MCF 10A (cell line): ENCODE measurements at regions of chr17 and their contacts with region 1.

Region 1: DNA sequence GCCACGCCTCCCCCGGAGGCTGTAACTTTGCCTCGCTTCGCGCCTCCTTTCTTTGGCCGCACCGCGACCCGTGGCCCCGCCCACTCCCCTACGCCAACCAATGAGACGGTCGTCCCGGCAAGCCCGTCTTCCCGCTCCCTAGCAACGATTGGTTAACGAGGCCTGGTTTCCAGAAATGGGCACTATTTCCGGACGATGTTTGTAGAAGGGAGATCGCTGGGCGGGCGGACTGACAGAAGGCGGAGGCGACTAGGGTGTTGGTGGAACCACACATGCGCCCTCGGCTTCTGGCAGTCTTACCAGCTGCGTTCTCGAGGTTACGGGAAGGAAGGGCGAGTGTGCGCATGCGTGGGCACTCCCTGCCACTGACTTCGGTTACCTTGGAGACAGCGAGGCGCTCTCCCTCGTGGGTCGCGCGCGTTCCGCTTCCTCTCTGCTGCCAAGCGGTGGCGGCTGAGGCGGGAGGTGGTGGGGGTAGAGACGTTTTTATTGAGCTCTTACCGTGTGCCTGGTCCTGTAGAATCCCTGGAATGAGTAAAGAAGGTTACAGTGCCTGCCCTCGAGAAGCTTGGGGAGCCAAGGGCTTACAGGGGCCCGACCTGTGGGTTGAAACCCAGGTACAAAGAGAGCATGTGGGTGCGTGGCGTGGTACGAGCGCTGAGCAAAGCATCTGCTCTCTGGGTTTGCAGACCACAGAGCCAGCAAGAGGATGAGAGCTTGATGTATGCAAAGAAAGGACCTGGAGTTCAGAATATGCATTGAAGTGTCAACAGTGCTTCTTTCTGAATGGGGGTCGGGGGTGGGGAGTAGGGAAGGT is 500 bp upstream of the MAP3K14 start:
- DNase-seq: peak; percentile 100
- H3K4me3 Mint-ChIP-seq: peak overlapping the region; percentile 86
- H3K27ac Mint-ChIP-seq: peak overlapping the region; percentile 98
- H3K4me1 Mint-ChIP-seq: peaks cover 71% of the 10 kb centered on the region
- H3K27me3 Mint-ChIP-seq: no peaks in the 10 kb centered on the region
- CTCF ChIP-seq: no peak

Region 2: DNA sequence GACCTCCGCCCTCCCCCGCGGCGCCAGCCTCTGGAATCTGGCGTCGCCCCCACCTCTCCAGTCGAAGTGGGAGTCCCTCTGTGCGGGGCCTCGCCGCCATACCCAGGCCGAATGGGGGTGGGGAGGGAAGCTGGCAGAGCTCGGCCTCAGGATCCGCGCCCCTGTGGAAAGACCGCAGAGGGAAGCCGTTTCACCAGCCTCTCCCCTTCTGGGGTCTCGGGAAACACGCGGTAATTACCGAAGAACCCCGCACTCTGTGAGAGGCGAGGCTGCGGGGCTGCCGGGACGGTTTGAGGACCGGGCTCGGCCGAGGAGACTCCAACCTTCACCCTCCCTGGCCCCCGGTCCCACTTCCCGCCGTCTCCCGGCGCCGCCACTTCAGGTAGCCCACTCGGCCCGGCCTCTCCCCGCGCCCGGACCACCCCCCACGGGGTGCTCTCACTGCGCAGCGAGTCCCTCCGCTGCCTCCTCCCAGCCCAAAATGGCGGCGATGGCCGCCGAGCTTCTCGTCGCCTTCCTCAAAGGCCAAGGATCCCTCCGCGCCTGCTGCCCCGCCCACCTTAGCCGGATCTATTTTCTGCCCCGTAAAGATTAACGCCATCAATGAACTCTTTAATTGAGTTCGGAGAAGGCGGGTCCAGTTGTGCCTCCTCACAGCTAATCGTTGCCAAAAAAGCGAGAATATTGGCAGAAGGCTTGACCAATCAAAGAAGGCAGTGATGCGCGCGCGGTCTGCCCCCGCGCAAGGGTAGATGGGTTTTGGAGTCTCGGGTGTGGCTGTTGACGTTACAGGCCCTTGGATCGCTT is 156.1 kb before region 1 on chr17:
- CTCF ChIA-PET with region 1: no interaction called
- POLR2A ChIA-PET with region 1: interaction called, 20 read pairs
- intact Hi-C with region 1: no loop called
- DNase-seq: peak; percentile 100
- H3K4me3 Mint-ChIP-seq: peak overlapping the region; percentile 98
- H3K27ac Mint-ChIP-seq: peak overlapping the region; percentile 99
- H3K4me1 Mint-ChIP-seq: peaks cover 18% of the 10 kb centered on the region
- H3K27me3 Mint-ChIP-seq: no peaks in the 10 kb centered on the region
- CTCF ChIP-seq: no peak

Region 3: DNA sequence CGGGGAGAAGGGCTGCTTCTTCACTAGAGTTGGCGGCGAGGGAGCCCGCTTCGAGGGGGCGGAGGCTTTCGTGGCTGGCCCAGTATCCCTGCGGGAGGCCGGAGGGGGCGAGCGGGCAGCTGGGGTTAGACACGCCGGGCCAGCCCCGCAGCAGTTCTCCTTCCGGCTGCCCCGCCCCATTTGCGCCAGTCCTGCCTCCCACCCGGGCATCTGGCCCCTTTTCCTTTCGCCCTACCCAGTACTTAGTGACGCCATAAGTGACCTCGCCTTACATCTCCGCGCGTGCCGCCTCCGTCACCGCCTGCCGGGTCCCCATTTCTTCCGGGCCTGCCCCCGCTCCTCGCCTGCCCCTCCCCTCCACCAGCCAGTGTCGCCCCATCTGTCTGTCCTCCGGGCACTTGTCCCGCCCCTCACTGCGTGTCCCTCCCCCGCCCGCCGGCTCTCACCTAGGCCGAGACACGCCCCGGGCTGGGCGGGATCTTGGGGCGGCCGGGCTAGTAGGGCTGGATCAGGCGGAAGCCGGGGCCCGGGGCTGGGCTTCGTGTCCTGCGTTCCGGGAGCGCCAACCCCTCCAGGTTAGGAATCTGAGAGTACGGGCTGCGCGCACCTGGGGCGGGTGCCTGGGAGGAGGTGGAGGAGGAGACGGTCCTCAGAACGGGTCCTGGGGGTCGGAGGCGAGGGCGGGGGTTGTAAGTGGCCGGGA is 69.7 kb before region 1 on chr17:
- CTCF ChIA-PET with region 1: interaction called, 3 read pairs
- POLR2A ChIA-PET with region 1: interaction called, 22 read pairs
- intact Hi-C with region 1: no loop called
- DNase-seq: peak; percentile 97
- H3K4me3 Mint-ChIP-seq: peak overlapping the region; percentile 96
- H3K27ac Mint-ChIP-seq: peak overlapping the region; percentile 80
- H3K4me1 Mint-ChIP-seq: peaks cover 20% of the 10 kb centered on the region
- H3K27me3 Mint-ChIP-seq: no peaks in the 10 kb centered on the region
- CTCF ChIP-seq: no peak

Region 4: GRCh38 chr17:45293413-45294211 is 23.7 kb before region 1 on chr17:
- CTCF ChIA-PET with region 1: interaction called, 34 read pairs
- POLR2A ChIA-PET with region 1: interaction called, 133 read pairs
- intact Hi-C with region 1: loop called (anchors 1 kb)
- DNase-seq: peak; percentile 95
- H3K4me3 Mint-ChIP-seq: peak overlapping the region; percentile 23
- H3K27ac Mint-ChIP-seq: peak overlapping the region; percentile 68
- H3K4me1 Mint-ChIP-seq: peaks cover 50% of the 10 kb centered on the region
- H3K27me3 Mint-ChIP-seq: no peaks in the 10 kb centered on the region
- CTCF ChIP-seq: no peak

Region 5: GRCh38 chr17:45371414-45372327 is 54.4 kb after region 1 on chr17:
- CTCF ChIA-PET with region 1: interaction called, 11 read pairs
- POLR2A ChIA-PET with region 1: interaction called, 404 read pairs
- intact Hi-C with region 1: loop called (anchors 1 kb)
- DNase-seq: peak; percentile 95
- H3K4me3 Mint-ChIP-seq: peak overlapping the region; percentile 83
- H3K27ac Mint-ChIP-seq: peak overlapping the region; percentile 95
- H3K4me1 Mint-ChIP-seq: peaks cover 35% of the 10 kb centered on the region
- H3K27me3 Mint-ChIP-seq: no peaks in the 10 kb centered on the region
- CTCF ChIP-seq: no peak